ENCODE measurements at regions of chr7 and their contacts with region 1.

Region 1: GRCh38 chr7:157507987-157508386 is 171.2 kb downstream of the DNAJB6 start:
- DNase-seq: no peak
- ATAC-seq: no peak
- H3K4me3 ChIP-seq: no peak overlapping the region
- H3K4me3 Mint-ChIP-seq: no peak overlapping the region
- H3K27ac ChIP-seq: no peak overlapping the region
- H3K27ac Mint-ChIP-seq: no peak overlapping the region
- H3K4me1 ChIP-seq: peaks cover 8% of the 10 kb centered on the region
- H3K4me1 Mint-ChIP-seq: peaks cover 14% of the 10 kb centered on the region
- H3K27me3 ChIP-seq: peaks cover 0 to 6% of the 10 kb centered on the region in 2 experiments
- H3K27me3 Mint-ChIP-seq: peaks cover 8% of the 10 kb centered on the region
- CTCF ChIP-seq: no peak

Region 2: GRCh38 chr7:157474689-157475088 is 33.3 kb before region 1 on chr7:
- CTCF ChIA-PET with region 1: interaction called, 3 read pairs
- POLR2A ChIA-PET with region 1: interaction called, 6 read pairs
- intact Hi-C with region 1: loop called (anchors 5 kb)
- DNase-seq: peak in 4 of 9 experiments; percentile 31 to 57 (median 44)
- ATAC-seq: no peak
- H3K4me3 ChIP-seq: no peak overlapping the region
- H3K4me3 Mint-ChIP-seq: no peak overlapping the region
- H3K27ac ChIP-seq: no peak overlapping the region
- H3K27ac Mint-ChIP-seq: no peak overlapping the region
- H3K4me1 ChIP-seq: peaks cover 40% of the 10 kb centered on the region
- H3K4me1 Mint-ChIP-seq: peaks cover 54% of the 10 kb centered on the region
- H3K27me3 ChIP-seq: no peaks in the 10 kb centered on the region
- H3K27me3 Mint-ChIP-seq: no peaks in the 10 kb centered on the region
- CTCF ChIP-seq: no peak

Region 3: GRCh38 chr7:157555313-157555712 is 47.3 kb after region 1 on chr7:
- CTCF ChIA-PET with region 1: no interaction called
- POLR2A ChIA-PET with region 1: no interaction called
- intact Hi-C with region 1: no loop called
- DNase-seq: no peak
- ATAC-seq: no peak
- H3K4me3 ChIP-seq: no peak overlapping the region
- H3K4me3 Mint-ChIP-seq: no peak overlapping the region
- H3K27ac ChIP-seq: no peak overlapping the region
- H3K27ac Mint-ChIP-seq: no peak overlapping the region
- H3K4me1 ChIP-seq: no peaks in the 10 kb centered on the region
- H3K4me1 Mint-ChIP-seq: no peaks in the 10 kb centered on the region
- H3K27me3 ChIP-seq: no peaks in the 10 kb centered on the region
- H3K27me3 Mint-ChIP-seq: no peaks in the 10 kb centered on the region
- CTCF ChIP-seq: no peak

Region 4: DNA sequence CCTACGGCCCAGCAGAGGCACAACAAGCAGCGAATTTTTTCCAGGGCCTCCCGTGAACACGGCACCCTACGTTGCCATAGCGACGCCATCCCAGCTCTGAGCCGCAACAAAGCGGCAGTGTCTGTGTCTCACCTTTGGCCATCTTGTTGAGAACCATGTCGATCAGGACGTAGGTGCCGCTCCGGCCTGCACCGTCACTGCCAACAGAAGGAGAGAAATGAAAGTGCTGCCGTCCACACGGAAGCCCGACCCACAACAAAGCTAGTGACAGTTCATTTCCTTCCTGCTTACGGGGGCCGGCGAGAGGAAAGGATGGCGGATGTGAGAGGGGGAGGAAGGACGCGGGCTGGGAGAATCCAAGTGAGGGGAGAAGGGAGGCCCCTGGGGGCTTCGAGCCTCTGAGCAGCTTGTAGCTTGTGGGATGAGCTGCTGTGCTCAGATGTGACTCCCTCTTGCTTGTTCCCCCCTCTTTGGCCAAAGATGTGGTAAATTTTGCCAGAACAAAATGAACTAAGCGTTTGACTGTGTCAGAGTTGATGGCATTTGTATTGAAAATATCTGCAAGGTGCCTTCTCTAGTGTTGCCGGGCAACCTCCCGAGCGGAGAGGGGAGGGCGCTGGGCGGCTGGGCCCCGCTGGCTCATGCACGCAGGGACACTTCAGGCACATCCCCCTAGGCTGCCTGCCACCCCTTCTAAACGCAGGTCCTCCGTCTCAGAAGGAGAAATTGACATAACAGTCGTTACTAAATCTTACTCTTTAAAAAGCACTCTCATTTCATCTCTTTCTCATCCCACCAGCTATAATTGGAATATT is 61.0 kb after region 1 on chr7:
- CTCF ChIA-PET with region 1: no interaction called
- POLR2A ChIA-PET with region 1: no interaction called
- intact Hi-C with region 1: loop called in 1 of 2 experiments (anchors 5 kb)
- DNase-seq: peak; percentile 26 to 83 (median 62)
- ATAC-seq: peak; percentile 80
- H3K4me3 ChIP-seq: peak overlapping the region; percentile 40 to 52
- H3K4me3 Mint-ChIP-seq: peak overlapping the region; percentile 89
- H3K27ac ChIP-seq: peak overlapping the region in 1 of 2 experiments; percentile 20
- H3K27ac Mint-ChIP-seq: peak overlapping the region; percentile 79
- H3K4me1 ChIP-seq: peaks cover 16% of the 10 kb centered on the region
- H3K4me1 Mint-ChIP-seq: peaks cover 22% of the 10 kb centered on the region
- H3K27me3 ChIP-seq: peaks cover 0 to 6% of the 10 kb centered on the region in 2 experiments
- H3K27me3 Mint-ChIP-seq: peaks cover 2% of the 10 kb centered on the region
- CTCF ChIP-seq: no peak

Region 5: DNA sequence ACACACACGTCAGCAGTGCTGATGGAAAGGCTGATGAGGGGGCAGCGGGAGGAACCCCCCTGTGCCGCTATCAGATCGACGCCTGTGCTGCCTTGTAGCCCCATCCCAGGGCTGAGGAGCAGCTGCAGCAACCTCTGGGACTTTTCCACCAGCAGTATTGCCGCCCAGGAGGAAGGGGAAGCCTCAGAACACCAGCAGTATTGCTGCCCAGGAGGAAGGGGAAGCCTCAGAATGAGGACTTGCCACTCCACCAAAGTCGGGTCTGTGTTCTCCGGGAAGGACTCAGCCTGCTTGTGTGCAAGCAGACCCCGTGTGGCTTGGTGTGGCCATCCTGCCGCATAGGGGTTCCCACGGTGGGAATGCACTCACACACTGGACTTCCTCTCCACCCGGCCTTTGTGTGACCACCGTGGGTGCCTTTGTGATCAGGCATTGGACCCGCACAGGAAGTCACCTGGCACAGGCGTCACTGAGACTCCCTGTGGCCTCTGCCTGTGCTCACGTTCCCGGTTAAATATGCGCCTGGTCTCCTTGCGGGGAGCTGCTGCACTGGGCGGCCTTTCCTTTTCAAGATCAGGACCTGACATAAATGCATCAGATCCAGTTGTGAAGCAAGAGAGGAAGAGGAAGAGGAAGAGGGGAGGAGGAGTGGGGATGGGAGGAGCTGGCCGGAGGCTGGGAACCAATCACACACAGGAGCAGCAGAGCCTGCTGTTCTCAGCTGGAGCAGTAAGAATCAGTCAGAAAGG is 77.3 kb after region 1 on chr7:
- CTCF ChIA-PET with region 1: no interaction called
- POLR2A ChIA-PET with region 1: no interaction called
- intact Hi-C with region 1: no loop called
- DNase-seq: no peak
- ATAC-seq: no peak
- H3K4me3 ChIP-seq: no peak overlapping the region
- H3K4me3 Mint-ChIP-seq: peak overlapping the region; percentile 65
- H3K27ac ChIP-seq: no peak overlapping the region
- H3K27ac Mint-ChIP-seq: no peak overlapping the region
- H3K4me1 ChIP-seq: no peaks in the 10 kb centered on the region
- H3K4me1 Mint-ChIP-seq: peaks cover 15% of the 10 kb centered on the region
- H3K27me3 ChIP-seq: peaks cover 0 to 4% of the 10 kb centered on the region in 2 experiments
- H3K27me3 Mint-ChIP-seq: peaks cover 40% of the 10 kb centered on the region
- CTCF ChIP-seq: no peak